HepG2 (cell line): ENCODE measurements at regions of chr9 and their contacts with region 1.

Region 1: DNA sequence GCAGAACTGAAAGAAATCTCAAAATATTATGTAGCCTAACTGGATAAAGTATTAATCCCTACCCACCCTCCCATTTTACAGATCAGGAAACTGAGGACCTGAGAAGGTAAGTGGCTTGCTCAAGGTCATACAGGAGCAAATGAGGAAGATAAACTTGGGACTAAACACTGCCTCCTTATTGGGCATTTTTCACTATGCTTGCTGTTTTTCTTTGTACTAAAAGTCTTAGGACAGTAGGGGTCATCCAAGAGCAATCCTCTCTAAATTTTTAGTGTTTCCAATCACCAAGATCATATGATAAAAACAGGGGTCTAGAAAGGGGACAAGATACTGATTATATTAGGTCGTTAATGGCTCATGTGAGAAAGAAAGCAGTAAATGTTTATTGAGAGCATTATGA is 80.8 kb downstream of the RORB start:
- DNase-seq: peak; percentile 9
- ATAC-seq: no peak
- H3K4me3 ChIP-seq: no peak overlapping the region
- H3K27ac ChIP-seq: no peak overlapping the region
- H3K4me1 ChIP-seq: no peaks in the 10 kb centered on the region
- H3K27me3 ChIP-seq: peaks cover 0 to 6% of the 10 kb centered on the region in 2 experiments; a peak in 1 of 5 replicates
- CTCF ChIP-seq: peak; percentile 38
- EP300 ChIP-seq: no peak
- POLR2A ChIP-seq: no peak
- RAD21 ChIP-seq: no peak

Region 2: GRCh38 chr9:74645007-74645639 is 67.2 kb after region 1 on chr9:
- CTCF ChIA-PET with region 1: no interaction called
- POLR2A ChIA-PET with region 1: no interaction called
- in situ Hi-C with region 1: no loop called
- intact Hi-C with region 1: loop called (anchors 1 kb)
- DNase-seq: peak; percentile 18
- ATAC-seq: peak; percentile 73
- H3K4me3 ChIP-seq: no peak overlapping the region
- H3K27ac ChIP-seq: no peak overlapping the region
- H3K4me1 ChIP-seq: no peaks in the 10 kb centered on the region
- H3K27me3 ChIP-seq: peaks cover 0 to 6% of the 10 kb centered on the region in 2 experiments; a peak in 1 of 5 replicates
- CTCF ChIP-seq: peak; percentile 59
- EP300 ChIP-seq: no peak
- POLR2A ChIP-seq: no peak
- RAD21 ChIP-seq: no peak

Region 3: GRCh38 chr9:74742792-74743730 is 165.1 kb after region 1 on chr9:
- CTCF ChIA-PET with region 1: no interaction called
- POLR2A ChIA-PET with region 1: no interaction called
- in situ Hi-C with region 1: no loop called
- intact Hi-C with region 1: loop called (anchors 1 kb)
- DNase-seq: peak; percentile 2
- ATAC-seq: peak; percentile 48; the same call in 1 of the 3 replicates
- H3K4me3 ChIP-seq: no peak overlapping the region
- H3K27ac ChIP-seq: no peak overlapping the region
- H3K4me1 ChIP-seq: no peaks in the 10 kb centered on the region
- H3K27me3 ChIP-seq: no peaks in the 10 kb centered on the region
- CTCF ChIP-seq: peak; percentile 64
- EP300 ChIP-seq: no peak
- POLR2A ChIP-seq: no peak
- RAD21 ChIP-seq: no peak